Activated CD8-positive, alpha-beta memory T cell treated with anti-CD3 and anti-CD28 coated beads, Interleukin-2, amount 10 ng/mL, durations not matched to agents 7 days and 5 days (primary cell): ENCODE measurements at regions of chr6 and their contacts with region 1.

Region 1: GRCh38 chr6:138692058-138692977 is 81.3 kb upstream of the CCDC28A start:
- DNase-seq: peak; percentile 60
- ATAC-seq: peak; percentile 67
- H3K4me3 Mint-ChIP-seq: peak overlapping the region; percentile 70
- H3K27ac Mint-ChIP-seq: no peak overlapping the region
- H3K4me1 Mint-ChIP-seq: peaks cover 6% of the 10 kb centered on the region
- H3K27me3 Mint-ChIP-seq: peaks cover 64% of the 10 kb centered on the region

Region 2: GRCh38 chr6:138588805-138589434 is 103.4 kb before region 1 on chr6:
- CTCF ChIA-PET with region 1: interaction called, 12 read pairs
- DNase-seq: peak; percentile 60
- ATAC-seq: peak; percentile 25
- H3K4me3 Mint-ChIP-seq: no peak overlapping the region
- H3K27ac Mint-ChIP-seq: no peak overlapping the region
- H3K4me1 Mint-ChIP-seq: peaks cover 33% of the 10 kb centered on the region
- H3K27me3 Mint-ChIP-seq: peaks cover 5% of the 10 kb centered on the region